IMR-90 (cell line): ENCODE measurements at regions of chr5 and their contacts with region 1.

Region 1: GRCh38 chr5:71522151-71522550 is 65.0 kb upstream of the MCCC2 start:
- DNase-seq: no peak
- ATAC-seq: no peak
- H3K4me3 ChIP-seq: no peak overlapping the region
- H3K27ac ChIP-seq: no peak overlapping the region
- H3K4me1 ChIP-seq: no peaks in the 10 kb centered on the region
- H3K27me3 ChIP-seq: no peaks in the 10 kb centered on the region
- CTCF ChIP-seq: no peak
- POLR2A ChIP-seq: no peak
- RAD21 ChIP-seq: no peak

Region 2: GRCh38 chr5:71461360-71461759 is 60.8 kb before region 1 on chr5:
- CTCF ChIA-PET with region 1: no interaction called
- POLR2A ChIA-PET with region 1: no interaction called
- dilution Hi-C with region 1: no loop called
- in situ Hi-C with region 1: no loop called
- intact Hi-C with region 1: loop called (anchors 10 kb)
- DNase-seq: no peak
- ATAC-seq: no peak
- H3K4me3 ChIP-seq: no peak overlapping the region
- H3K27ac ChIP-seq: no peak overlapping the region
- H3K4me1 ChIP-seq: no peaks in the 10 kb centered on the region
- H3K27me3 ChIP-seq: no peaks in the 10 kb centered on the region
- CTCF ChIP-seq: no peak
- POLR2A ChIP-seq: no peak
- RAD21 ChIP-seq: no peak

Region 3: DNA sequence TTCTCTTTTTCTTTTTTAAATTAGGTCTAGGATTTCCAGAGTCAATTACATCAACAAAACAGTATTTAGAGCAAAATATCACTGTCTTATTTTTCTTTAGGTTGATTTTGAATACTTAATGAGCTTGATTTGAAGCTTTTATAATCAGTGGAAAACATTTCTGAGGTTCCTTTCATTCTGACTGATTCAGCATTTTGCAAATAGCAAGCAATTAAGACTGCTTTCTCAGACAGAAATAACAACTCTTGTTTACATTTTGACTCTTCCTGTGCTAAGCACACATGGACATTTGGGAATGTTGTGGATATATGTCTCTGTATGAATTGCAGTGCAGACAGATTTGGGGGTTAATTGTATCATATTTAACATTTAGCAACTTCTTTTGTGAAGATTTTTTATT is 42.7 kb after region 1 on chr5:
- CTCF ChIA-PET with region 1: interaction called, 3 read pairs
- POLR2A ChIA-PET with region 1: no interaction called
- dilution Hi-C with region 1: no loop called
- in situ Hi-C with region 1: no loop called
- intact Hi-C with region 1: loop called (anchors 5 kb)
- DNase-seq: no peak
- ATAC-seq: peak; percentile 21; the same call in 1 of the 2 replicates
- H3K4me3 ChIP-seq: no peak overlapping the region
- H3K27ac ChIP-seq: no peak overlapping the region
- H3K4me1 ChIP-seq: no peaks in the 10 kb centered on the region
- H3K27me3 ChIP-seq: no peaks in the 10 kb centered on the region
- CTCF ChIP-seq: no peak
- POLR2A ChIP-seq: no peak
- RAD21 ChIP-seq: no peak

Region 4: GRCh38 chr5:71767661-71768060 is 245.5 kb after region 1 on chr5:
- CTCF ChIA-PET with region 1: no interaction called
- POLR2A ChIA-PET with region 1: no interaction called
- dilution Hi-C with region 1: no loop called
- in situ Hi-C with region 1: no loop called
- intact Hi-C with region 1: no loop called
- DNase-seq: peak; percentile 28
- ATAC-seq: no peak
- H3K4me3 ChIP-seq: no peak overlapping the region
- H3K27ac ChIP-seq: no peak overlapping the region
- H3K4me1 ChIP-seq: no peaks in the 10 kb centered on the region
- H3K27me3 ChIP-seq: peaks cover 22% of the 10 kb centered on the region
- CTCF ChIP-seq: no peak
- POLR2A ChIP-seq: no peak
- RAD21 ChIP-seq: no peak

Region 5: GRCh38 chr5:71816307-71816706 is 294.2 kb after region 1 on chr5:
- CTCF ChIA-PET with region 1: no interaction called
- POLR2A ChIA-PET with region 1: no interaction called
- dilution Hi-C with region 1: no loop called
- in situ Hi-C with region 1: no loop called
- intact Hi-C with region 1: no loop called
- DNase-seq: no peak
- ATAC-seq: no peak
- H3K4me3 ChIP-seq: no peak overlapping the region
- H3K27ac ChIP-seq: no peak overlapping the region
- H3K4me1 ChIP-seq: no peaks in the 10 kb centered on the region
- H3K27me3 ChIP-seq: peaks cover 18% of the 10 kb centered on the region
- CTCF ChIP-seq: no peak
- POLR2A ChIP-seq: no peak
- RAD21 ChIP-seq: no peak